Ovary (tissue), 10 donors: ENCODE measurements at regions of chr19 and their contacts with region 1.

Region 1: DNA sequence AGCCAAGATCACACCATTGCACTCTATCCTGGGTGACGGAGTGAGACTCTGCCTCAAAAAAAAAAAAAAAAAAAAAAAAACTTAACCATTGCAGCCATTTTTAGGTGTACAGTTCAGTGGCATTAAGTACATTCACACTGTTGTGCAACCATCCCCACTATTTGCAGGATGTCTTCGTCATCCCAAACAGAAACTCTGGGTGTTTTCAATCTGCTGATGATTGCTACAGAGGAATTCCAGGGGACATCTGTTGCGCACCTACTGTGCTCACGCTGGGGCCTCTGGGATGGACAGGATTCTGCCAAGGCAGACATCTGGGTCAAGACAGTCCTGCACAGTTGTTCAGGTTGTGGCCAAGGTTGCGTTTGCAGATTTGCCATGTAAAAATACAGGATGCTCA is 2.4 kb upstream of the APOC4 start:
- DNase-seq: no peak
- H3K4me3 ChIP-seq: no peak overlapping the region
- H3K27ac ChIP-seq: no peak overlapping the region
- H3K4me1 ChIP-seq: peaks cover 4% of the 10 kb centered on the region
- H3K27me3 ChIP-seq: no peaks in the 10 kb centered on the region
- CTCF ChIP-seq: no peak
- EP300 ChIP-seq: no peak
- POLR2A ChIP-seq: no peak

Region 2: GRCh38 chr19:44856421-44857083 is 83.1 kb before region 1 on chr19:
- intact Hi-C with region 1: no loop called
- DNase-seq: no peak
- H3K4me3 ChIP-seq: no peak overlapping the region
- H3K27ac ChIP-seq: no peak overlapping the region
- H3K4me1 ChIP-seq: no peaks in the 10 kb centered on the region
- H3K27me3 ChIP-seq: no peaks in the 10 kb centered on the region
- CTCF ChIP-seq: no peak
- EP300 ChIP-seq: no peak
- POLR2A ChIP-seq: no peak

Region 3: GRCh38 chr19:44897835-44898234 is 41.8 kb before region 1 on chr19:
- intact Hi-C with region 1: no loop called
- DNase-seq: no peak
- H3K4me3 ChIP-seq: no peak overlapping the region
- H3K27ac ChIP-seq: no peak overlapping the region
- H3K4me1 ChIP-seq: no peaks in the 10 kb centered on the region
- H3K27me3 ChIP-seq: no peaks in the 10 kb centered on the region
- CTCF ChIP-seq: no peak
- EP300 ChIP-seq: no peak
- POLR2A ChIP-seq: no peak

Region 4: GRCh38 chr19:44909775-44910174 is 29.9 kb before region 1 on chr19:
- intact Hi-C with region 1: loop called in 1 of 4 experiments (anchors 2 kb)
- DNase-seq: no peak
- H3K4me3 ChIP-seq: no peak overlapping the region
- H3K27ac ChIP-seq: no peak overlapping the region
- H3K4me1 ChIP-seq: peaks cover 15% of the 10 kb centered on the region
- H3K27me3 ChIP-seq: no peaks in the 10 kb centered on the region
- CTCF ChIP-seq: no peak
- EP300 ChIP-seq: no peak
- POLR2A ChIP-seq: no peak

Region 5: GRCh38 chr19:44984005-44984404 is 44.3 kb after region 1 on chr19:
- intact Hi-C with region 1: no loop called
- DNase-seq: no peak
- H3K4me3 ChIP-seq: no peak overlapping the region
- H3K27ac ChIP-seq: no peak overlapping the region
- H3K4me1 ChIP-seq: no peaks in the 10 kb centered on the region
- H3K27me3 ChIP-seq: no peaks in the 10 kb centered on the region
- CTCF ChIP-seq: no peak
- EP300 ChIP-seq: no peak
- POLR2A ChIP-seq: no peak

Region 6: GRCh38 chr19:44993926-44994537 is 54.4 kb after region 1 on chr19:
- intact Hi-C with region 1: no loop called
- DNase-seq: no peak
- H3K4me3 ChIP-seq: no peak overlapping the region
- H3K27ac ChIP-seq: no peak overlapping the region
- H3K4me1 ChIP-seq: no peaks in the 10 kb centered on the region
- H3K27me3 ChIP-seq: no peaks in the 10 kb centered on the region
- CTCF ChIP-seq: no peak
- EP300 ChIP-seq: no peak
- POLR2A ChIP-seq: no peak